Heart left ventricle (tissue), 16 donors: ENCODE measurements at regions of chr3 and their contacts with region 1.

Region 1: GRCh38 chr3:71616571-71617101 is 33.1 kb upstream of the FOXP1 start:
- DNase-seq: no peak
- ATAC-seq: no peak
- H3K4me3 ChIP-seq: no peak overlapping the region
- H3K27ac ChIP-seq: no peak overlapping the region
- H3K4me1 ChIP-seq: no peaks in the 10 kb centered on the region
- H3K27me3 ChIP-seq: no peaks in the 10 kb centered on the region
- CTCF ChIP-seq: no peak
- POLR2A ChIP-seq: no peak

Region 2: DNA sequence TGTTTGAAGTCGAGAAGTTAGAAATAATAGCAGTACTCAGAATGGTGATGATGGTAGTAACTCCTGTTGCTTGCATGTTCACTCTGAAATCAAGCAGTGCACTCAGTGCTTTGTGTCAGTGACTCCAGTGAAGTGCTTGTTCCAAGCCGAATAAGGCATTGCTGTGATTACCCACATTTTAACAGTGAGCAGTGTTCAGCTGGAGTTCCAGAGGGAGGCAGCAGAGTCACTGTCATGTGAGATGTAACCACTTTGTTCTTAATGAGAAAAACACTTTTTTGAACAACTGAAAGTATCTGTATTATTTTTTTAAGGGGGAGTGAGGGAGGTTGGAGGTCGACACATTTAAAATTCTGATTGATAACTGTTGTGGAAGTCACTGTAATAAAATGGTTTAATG is 1307.9 kb before region 1 on chr3:
- intact Hi-C with region 1: loop called in 1 of 10 experiments (anchors 5 kb)
- DNase-seq: no peak
- ATAC-seq: no peak
- H3K4me3 ChIP-seq: no peak overlapping the region
- H3K27ac ChIP-seq: no peak overlapping the region
- H3K4me1 ChIP-seq: no peaks in the 10 kb centered on the region
- H3K27me3 ChIP-seq: peaks cover 0 to 3% (median 0%) of the 10 kb centered on the region in 9 donors
- CTCF ChIP-seq: peak in 2 of 12 donors; percentile 14 to 27
- POLR2A ChIP-seq: no peak

Region 3: GRCh38 chr3:71857956-71858355 is 241.3 kb after region 1 on chr3:
- intact Hi-C with region 1: no loop called
- DNase-seq: no peak
- ATAC-seq: no peak
- H3K4me3 ChIP-seq: no peak overlapping the region
- H3K27ac ChIP-seq: no peak overlapping the region
- H3K4me1 ChIP-seq: peaks cover 0 to 14% (median 0%) of the 10 kb centered on the region in 12 donors
- H3K27me3 ChIP-seq: peaks cover 0 to 17% (median 0%) of the 10 kb centered on the region in 9 donors
- CTCF ChIP-seq: no peak
- POLR2A ChIP-seq: no peak